GM12878 (cell line): ENCODE measurements at regions of chr1 and their contacts with region 1.

Region 1: GRCh38 chr1:234842726-234843641 is 233.0 kb upstream of the IRF2BP2 start:
- DNase-seq: peak; percentile 95
- ATAC-seq: peak; percentile 74
- H3K4me3 ChIP-seq: peak overlapping the region; percentile 58
- H3K27ac ChIP-seq: peak overlapping the region; percentile 97
- H3K4me1 ChIP-seq: peaks cover 57% of the 10 kb centered on the region
- H3K27me3 ChIP-seq: no peaks in the 10 kb centered on the region
- CTCF ChIP-seq: no peak; a peak in 1 of 6 replicates
- EP300 ChIP-seq: peak in 1 of 2 experiments; percentile 47; a peak in 1 of 4 replicates
- POLR2A ChIP-seq: peak; percentile 81
- RAD21 ChIP-seq: peak; percentile 56

Region 2: GRCh38 chr1:234599617-234600417 is 243.2 kb before region 1 on chr1:
- CTCF ChIA-PET with region 1: interaction called, 5 read pairs
- POLR2A ChIA-PET with region 1: interaction called, 8 read pairs
- RAD21 ChIA-PET with region 1: interaction called, 30 read pairs
- SMC1A ChIA-PET with region 1: interaction called, 81 read pairs
- in situ Hi-C with region 1: no loop called
- intact Hi-C with region 1: no loop called
- DNase-seq: no peak
- ATAC-seq: peak; percentile 76
- H3K4me3 ChIP-seq: peak overlapping the region; percentile 67; the same call in 1 of the 2 replicates
- H3K27ac ChIP-seq: peak overlapping the region; percentile 75
- H3K4me1 ChIP-seq: peaks cover 22% of the 10 kb centered on the region
- H3K27me3 ChIP-seq: no peaks in the 10 kb centered on the region
- CTCF ChIP-seq: 0 out of 6 replicates have a peak, but pooled peaks of 1 of the 3 experiments have one; percentile 5
- EP300 ChIP-seq: 0 out of 4 replicates have a peak, but pooled peaks of 1 of the 2 experiments have one; percentile 42
- POLR2A ChIP-seq: peak; percentile 70; the same call in 1 of the 2 replicates
- RAD21 ChIP-seq: no peak

Region 3: DNA sequence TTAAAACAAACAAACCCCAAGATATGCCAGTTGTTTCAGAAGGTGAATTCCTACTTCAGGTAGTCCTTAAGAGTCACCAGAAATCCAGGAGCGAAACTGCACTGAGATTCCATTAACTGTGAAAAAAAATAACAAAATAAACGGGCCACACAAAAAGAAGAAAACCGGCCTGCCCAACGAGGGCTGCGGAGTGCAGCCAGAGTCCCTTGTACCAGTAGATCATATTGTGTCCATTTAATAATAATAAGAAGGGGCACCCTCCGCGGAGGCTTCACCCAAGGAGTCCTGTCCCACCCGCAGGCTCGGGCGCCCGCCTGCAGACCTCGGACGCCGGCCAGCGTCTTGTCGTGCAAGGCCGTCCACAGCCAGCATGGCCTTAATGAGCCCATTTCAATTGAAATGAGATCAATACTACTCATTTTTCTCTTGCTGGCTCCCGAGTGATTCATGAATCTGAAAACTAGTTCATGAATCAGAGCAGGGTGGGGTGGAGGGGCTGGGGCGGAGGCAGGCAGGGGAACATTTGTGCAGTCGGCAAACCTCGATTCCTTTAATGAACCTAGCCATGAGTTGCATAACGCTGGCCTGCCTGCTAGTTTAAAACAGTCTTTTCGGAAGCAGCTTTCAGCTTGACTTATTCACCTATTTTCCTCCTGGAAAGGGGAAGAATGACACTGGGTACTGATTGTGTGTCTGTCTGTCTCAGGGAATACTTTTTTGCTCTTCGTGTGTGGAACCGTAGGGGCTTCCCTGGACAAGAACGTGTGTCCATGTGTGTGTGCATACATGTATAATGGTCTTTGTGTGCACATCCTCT is 119.9 kb before region 1 on chr1:
- CTCF ChIA-PET with region 1: no interaction called
- POLR2A ChIA-PET with region 1: interaction called, 7 read pairs
- RAD21 ChIA-PET with region 1: interaction called, 66 read pairs
- SMC1A ChIA-PET with region 1: interaction called, 26 read pairs
- in situ Hi-C with region 1: loop called (anchors 25 kb)
- intact Hi-C with region 1: loop called (anchors 1 kb)
- DNase-seq: no peak
- ATAC-seq: no peak
- H3K4me3 ChIP-seq: no peak overlapping the region
- H3K27ac ChIP-seq: peak overlapping the region; percentile 94
- H3K4me1 ChIP-seq: peaks cover 49% of the 10 kb centered on the region
- H3K27me3 ChIP-seq: no peaks in the 10 kb centered on the region
- CTCF ChIP-seq: no peak
- EP300 ChIP-seq: no peak
- POLR2A ChIP-seq: no peak
- RAD21 ChIP-seq: no peak

Region 4: DNA sequence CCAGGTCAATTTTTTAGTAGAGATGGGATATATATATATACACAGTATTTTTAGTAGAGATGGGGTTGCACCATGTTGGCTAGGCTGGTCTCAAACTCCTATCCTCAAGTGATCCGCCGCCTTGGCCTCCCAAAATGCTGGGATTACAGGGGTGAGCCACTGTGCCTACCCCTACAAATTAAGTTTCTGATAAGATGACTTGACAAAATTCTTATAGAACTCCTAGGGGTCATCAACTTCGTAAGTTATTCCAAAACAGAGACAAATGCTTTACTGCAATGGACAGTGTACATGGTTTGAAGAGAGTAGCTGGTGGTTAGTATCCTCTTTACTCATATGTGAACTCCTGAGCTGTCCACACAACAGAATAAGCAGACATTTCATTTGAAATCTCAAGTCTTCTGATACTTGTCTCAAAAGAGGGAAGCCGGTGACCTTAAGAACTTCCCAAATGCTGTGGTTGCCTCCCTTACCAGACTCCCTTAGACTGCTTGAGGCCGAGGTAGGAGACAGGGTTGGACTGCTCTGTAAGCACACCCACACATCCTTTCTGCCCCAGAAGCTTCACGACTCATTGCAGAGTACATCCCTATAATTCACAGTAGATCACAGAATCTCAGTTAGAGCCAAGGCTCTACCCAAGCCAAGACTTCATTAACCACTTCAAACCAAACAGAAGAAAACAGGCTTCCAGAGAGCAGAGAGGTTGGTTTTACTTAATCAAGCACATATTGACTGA is 11.1 kb after region 1 on chr1:
- CTCF ChIA-PET with region 1: interaction called, 6 read pairs
- POLR2A ChIA-PET with region 1: interaction called, 5 read pairs
- RAD21 ChIA-PET with region 1: no interaction called
- SMC1A ChIA-PET with region 1: interaction called, 49 read pairs
- in situ Hi-C with region 1: no loop called
- intact Hi-C with region 1: no loop called
- DNase-seq: no peak
- ATAC-seq: no peak
- H3K4me3 ChIP-seq: no peak overlapping the region
- H3K27ac ChIP-seq: no peak overlapping the region
- H3K4me1 ChIP-seq: peaks cover 16% of the 10 kb centered on the region
- H3K27me3 ChIP-seq: no peaks in the 10 kb centered on the region
- CTCF ChIP-seq: no peak
- EP300 ChIP-seq: no peak
- POLR2A ChIP-seq: no peak
- RAD21 ChIP-seq: no peak

Region 5: GRCh38 chr1:234933475-234933874 is 90.5 kb after region 1 on chr1:
- CTCF ChIA-PET with region 1: no interaction called
- POLR2A ChIA-PET with region 1: interaction called, 4 read pairs
- RAD21 ChIA-PET with region 1: interaction called, 20 read pairs
- SMC1A ChIA-PET with region 1: interaction called, 10 read pairs
- in situ Hi-C with region 1: no loop called
- intact Hi-C with region 1: no loop called
- DNase-seq: peak; percentile 85
- ATAC-seq: peak; percentile 95
- H3K4me3 ChIP-seq: peak overlapping the region; percentile 44; the same call in 1 of the 2 replicates
- H3K27ac ChIP-seq: peak overlapping the region; percentile 95
- H3K4me1 ChIP-seq: peaks cover 41% of the 10 kb centered on the region
- H3K27me3 ChIP-seq: no peaks in the 10 kb centered on the region
- CTCF ChIP-seq: no peak
- EP300 ChIP-seq: peak; percentile 75 to 81
- POLR2A ChIP-seq: peak; percentile 55; the same call in 1 of the 2 replicates
- RAD21 ChIP-seq: no peak

Region 6: GRCh38 chr1:234978397-234979295 is 135.7 kb after region 1 on chr1:
- CTCF ChIA-PET with region 1: interaction called, 3 read pairs
- POLR2A ChIA-PET with region 1: interaction called, 7 read pairs
- RAD21 ChIA-PET with region 1: interaction called, 125 read pairs
- SMC1A ChIA-PET with region 1: interaction called, 44 read pairs
- in situ Hi-C with region 1: loop called (anchors 5 kb)
- intact Hi-C with region 1: loop called (anchors 2 kb)
- DNase-seq: peak; percentile 94
- ATAC-seq: peak; percentile 66
- H3K4me3 ChIP-seq: peak overlapping the region; percentile 29
- H3K27ac ChIP-seq: peak overlapping the region; percentile 98
- H3K4me1 ChIP-seq: peaks cover 76% of the 10 kb centered on the region
- H3K27me3 ChIP-seq: no peaks in the 10 kb centered on the region
- CTCF ChIP-seq: peak in 2 of 3 experiments; percentile 13 to 16; a peak in 2 of 6 replicates
- EP300 ChIP-seq: peak; percentile 96 to 99
- POLR2A ChIP-seq: 0 out of 2 replicates have a peak, but pooled peaks have one; percentile 56
- RAD21 ChIP-seq: peak; percentile 44